Panc1 (cell line): ENCODE measurements at regions of chr2 and their contacts with region 1.

Region 1: GRCh38 chr2:24304098-24304497 is 56.2 kb downstream of the ITSN2 start:
- DNase-seq: no peak
- ATAC-seq: no peak
- H3K4me3 ChIP-seq: no peak overlapping the region
- H3K27ac ChIP-seq: no peak overlapping the region
- H3K4me1 ChIP-seq: no peaks in the 10 kb centered on the region
- H3K27me3 ChIP-seq: no peaks in the 10 kb centered on the region
- CTCF ChIP-seq: no peak

Region 2: DNA sequence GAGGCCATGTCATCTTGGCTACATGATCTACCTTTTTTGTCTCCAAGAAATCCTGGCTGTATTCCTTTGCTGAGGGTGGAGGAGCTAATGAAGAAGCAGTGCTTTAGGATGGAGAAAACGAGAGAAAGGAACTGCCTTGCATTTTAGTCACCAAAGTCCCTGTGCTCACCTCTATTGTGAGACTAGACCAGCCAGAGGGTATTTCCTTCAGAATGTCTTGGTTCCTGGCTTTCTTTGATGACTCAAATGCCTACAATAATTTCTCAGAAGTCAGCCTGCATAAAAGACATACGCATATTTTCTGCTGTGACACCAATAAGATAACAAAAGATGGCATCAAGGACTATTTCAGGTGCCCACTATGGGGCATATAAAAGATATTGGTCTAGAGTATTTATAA is 238.8 kb before region 1 on chr2:
- CTCF ChIA-PET with region 1: no interaction called
- POLR2A ChIA-PET with region 1: no interaction called
- in situ Hi-C with region 1: no loop called
- intact Hi-C with region 1: no loop called
- DNase-seq: no peak
- ATAC-seq: no peak
- H3K4me3 ChIP-seq: no peak overlapping the region
- H3K27ac ChIP-seq: no peak overlapping the region
- H3K4me1 ChIP-seq: no peaks in the 10 kb centered on the region
- H3K27me3 ChIP-seq: no peaks in the 10 kb centered on the region
- CTCF ChIP-seq: no peak

Region 3: GRCh38 chr2:24515831-24516230 is 211.7 kb after region 1 on chr2:
- CTCF ChIA-PET with region 1: no interaction called
- POLR2A ChIA-PET with region 1: interaction called, 10 read pairs
- in situ Hi-C with region 1: no loop called
- intact Hi-C with region 1: no loop called
- DNase-seq: no peak
- ATAC-seq: peak; percentile 88
- H3K4me3 ChIP-seq: no peak overlapping the region
- H3K27ac ChIP-seq: no peak overlapping the region
- H3K4me1 ChIP-seq: no peaks in the 10 kb centered on the region
- H3K27me3 ChIP-seq: no peaks in the 10 kb centered on the region
- CTCF ChIP-seq: no peak